Activated naive CD4-positive, alpha-beta T cell treated with anti-CD3 and anti-CD28 coated beads for 36 hours (primary cell): ENCODE measurements at regions of chr2 and their contacts with region 1.

Region 1: GRCh38 chr2:44479122-44479887 is 117.6 kb downstream of the CAMKMT start:
- DNase-seq: peak; percentile 56
- H3K4me3 Mint-ChIP-seq: no peak overlapping the region
- H3K27ac Mint-ChIP-seq: no peak overlapping the region
- H3K4me1 Mint-ChIP-seq: peaks cover 7% of the 10 kb centered on the region
- H3K27me3 Mint-ChIP-seq: no peaks in the 10 kb centered on the region

Region 2: DNA sequence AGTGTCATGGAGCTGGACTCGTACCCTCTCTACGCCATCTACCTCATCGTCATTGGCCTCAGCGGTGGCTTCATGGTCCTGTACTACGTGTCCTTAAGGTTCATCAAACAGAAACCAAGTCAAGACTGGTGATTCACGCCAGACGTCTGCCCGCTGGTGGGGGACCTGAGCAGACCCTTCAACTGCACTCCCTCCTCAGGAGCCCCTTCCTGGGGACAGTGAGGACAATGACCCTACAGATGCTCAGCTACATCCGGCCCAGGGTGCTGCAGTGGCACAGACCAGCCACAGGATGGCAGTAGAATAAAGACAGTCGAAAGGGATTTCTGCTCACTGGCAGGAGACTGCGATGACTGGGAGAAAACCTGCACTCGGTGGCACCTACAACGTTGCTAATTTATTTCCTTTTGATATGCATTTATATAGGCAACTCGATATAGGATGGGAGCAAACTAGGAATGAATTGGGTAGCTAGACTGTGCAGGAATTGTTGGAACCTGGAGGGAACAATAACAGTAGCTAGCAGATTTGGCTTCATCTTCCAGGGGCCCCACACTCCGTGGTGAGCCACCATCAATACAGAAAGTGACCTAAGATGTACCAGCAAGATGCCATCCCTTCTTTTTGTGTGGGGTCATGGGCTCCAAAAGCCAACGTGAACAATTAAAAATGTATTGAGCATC is 601.4 kb before region 1 on chr2:
- CTCF ChIA-PET with region 1: no interaction called
- intact Hi-C with region 1: loop called (anchors 1 kb)
- DNase-seq: peak; percentile 86
- H3K4me3 Mint-ChIP-seq: no peak overlapping the region
- H3K27ac Mint-ChIP-seq: no peak overlapping the region
- H3K4me1 Mint-ChIP-seq: peaks cover 3% of the 10 kb centered on the region
- H3K27me3 Mint-ChIP-seq: peaks cover 16% of the 10 kb centered on the region

Region 3: GRCh38 chr2:44244129-44244871 is 235.0 kb before region 1 on chr2:
- CTCF ChIA-PET with region 1: no interaction called
- intact Hi-C with region 1: loop called (anchors 2 kb)
- DNase-seq: peak; percentile 69
- H3K4me3 Mint-ChIP-seq: peak overlapping the region; percentile 71
- H3K27ac Mint-ChIP-seq: no peak overlapping the region
- H3K4me1 Mint-ChIP-seq: peaks cover 21% of the 10 kb centered on the region
- H3K27me3 Mint-ChIP-seq: no peaks in the 10 kb centered on the region

Region 4: DNA sequence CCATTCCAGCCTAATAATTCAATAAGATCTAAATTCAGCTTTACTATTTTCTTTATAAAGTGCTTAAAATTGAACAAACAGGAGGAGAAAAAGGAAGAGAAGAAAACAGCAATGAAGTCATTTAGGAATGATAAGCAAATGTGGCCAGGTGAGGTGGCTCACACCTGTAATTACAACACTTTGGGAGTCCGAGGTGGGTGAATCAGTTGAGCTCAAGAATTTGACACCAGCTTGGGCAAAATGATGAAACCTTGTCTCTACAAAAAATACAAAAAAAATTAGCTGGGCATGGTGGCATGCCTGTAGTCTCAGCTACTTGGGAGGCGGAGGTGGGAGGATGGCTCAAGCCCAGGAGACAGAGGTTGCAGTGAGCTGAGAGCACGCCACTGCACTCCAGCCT is 11.4 kb after region 1 on chr2:
- CTCF ChIA-PET with region 1: interaction called, 11 read pairs
- intact Hi-C with region 1: no loop called
- DNase-seq: no peak
- H3K4me3 Mint-ChIP-seq: no peak overlapping the region
- H3K27ac Mint-ChIP-seq: no peak overlapping the region
- H3K4me1 Mint-ChIP-seq: no peaks in the 10 kb centered on the region
- H3K27me3 Mint-ChIP-seq: no peaks in the 10 kb centered on the region

Region 5: GRCh38 chr2:44668336-44668735 is 189.0 kb after region 1 on chr2:
- CTCF ChIA-PET with region 1: interaction called, 3 read pairs
- intact Hi-C with region 1: loop called (anchors 1 kb)
- DNase-seq: no peak
- H3K4me3 Mint-ChIP-seq: no peak overlapping the region
- H3K27ac Mint-ChIP-seq: no peak overlapping the region
- H3K4me1 Mint-ChIP-seq: no peaks in the 10 kb centered on the region
- H3K27me3 Mint-ChIP-seq: no peaks in the 10 kb centered on the region

Region 6: DNA sequence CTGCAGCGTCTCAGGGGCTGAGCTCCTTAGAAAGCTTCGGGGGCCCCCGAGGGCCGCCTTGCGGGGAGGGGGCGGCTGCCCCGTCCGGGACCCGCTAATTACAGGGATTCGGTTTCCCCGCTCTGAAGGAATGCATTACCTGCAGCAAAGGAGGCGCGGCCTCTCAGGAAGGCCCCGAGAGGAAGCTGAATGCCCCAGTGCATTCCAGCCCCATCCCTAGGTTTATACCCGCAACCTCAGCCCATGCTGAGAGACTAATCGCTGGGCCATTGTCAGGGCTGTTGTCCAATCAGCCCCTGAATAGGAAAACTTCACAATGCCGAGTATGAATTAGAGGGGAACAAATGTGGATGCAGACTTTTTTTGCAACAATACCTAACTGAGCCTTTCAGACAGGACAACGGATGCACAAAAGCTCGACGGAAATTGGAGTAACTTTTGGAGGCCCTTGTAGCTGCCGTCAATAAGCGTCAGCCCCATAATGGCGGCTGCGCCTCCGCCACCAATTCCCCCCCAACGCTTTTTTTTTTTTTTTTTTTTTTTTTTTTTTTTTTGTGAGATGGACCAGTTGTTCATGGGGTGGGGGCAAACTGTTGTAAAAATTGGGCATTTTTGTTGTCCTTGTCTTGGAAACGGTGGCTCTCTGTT is 323.6 kb after region 1 on chr2:
- CTCF ChIA-PET with region 1: interaction called, 11 read pairs
- intact Hi-C with region 1: no loop called
- DNase-seq: no peak
- H3K4me3 Mint-ChIP-seq: no peak overlapping the region
- H3K27ac Mint-ChIP-seq: no peak overlapping the region
- H3K4me1 Mint-ChIP-seq: peaks cover 14% of the 10 kb centered on the region
- H3K27me3 Mint-ChIP-seq: peaks cover 78% of the 10 kb centered on the region